ENCODE measurements at regions of chr10 and their contacts with region 1.

Region 1: DNA sequence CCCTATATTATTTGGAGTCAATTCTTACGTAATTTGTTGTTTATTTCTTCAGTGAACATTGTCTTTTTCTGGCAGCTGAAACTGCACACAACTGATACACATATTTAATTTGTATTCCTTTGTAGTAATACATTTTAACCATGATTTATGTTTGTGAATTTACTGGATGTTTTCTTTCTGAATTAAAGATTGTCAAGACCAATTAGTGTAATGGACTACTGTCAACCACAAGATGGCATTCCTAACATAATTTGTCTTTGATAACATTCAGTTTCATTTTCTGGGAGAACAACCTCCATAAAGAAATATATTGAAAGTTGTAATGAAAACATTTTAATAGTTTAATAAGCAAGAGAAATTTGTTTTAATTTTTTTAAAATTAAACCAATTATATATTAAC is 10.1 kb downstream of the THNSL1 start:
- DNase-seq: no peak

Region 2: DNA sequence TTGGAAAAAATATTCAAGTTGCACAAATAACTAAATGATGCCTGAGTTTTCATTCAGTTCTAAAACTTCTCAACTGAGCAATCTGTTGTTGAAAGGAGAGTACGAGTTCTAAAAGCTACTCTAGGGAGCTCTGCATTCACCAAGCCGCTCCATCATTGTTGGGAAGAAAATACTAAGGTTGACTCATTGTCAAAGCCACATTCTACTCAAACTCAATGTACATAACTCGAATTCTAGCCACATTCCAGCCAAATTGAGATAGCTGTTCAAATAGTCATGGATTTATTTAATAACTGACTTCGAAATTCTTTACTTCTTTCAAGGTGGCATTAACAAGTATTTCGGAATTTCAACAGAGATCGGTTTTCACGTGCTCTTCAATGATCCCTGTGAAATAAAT is 754.1 kb before region 1 on chr10:
- intact Hi-C with region 1: no loop called
- DNase-seq: no peak

Region 3: GRCh38 chr10:24661376-24661775 is 365.1 kb before region 1 on chr10:
- intact Hi-C with region 1: no loop called
- DNase-seq: no peak

Region 4: GRCh38 chr10:24800861-24801260 is 225.6 kb before region 1 on chr10:
- intact Hi-C with region 1: no loop called
- DNase-seq: no peak

Region 5: DNA sequence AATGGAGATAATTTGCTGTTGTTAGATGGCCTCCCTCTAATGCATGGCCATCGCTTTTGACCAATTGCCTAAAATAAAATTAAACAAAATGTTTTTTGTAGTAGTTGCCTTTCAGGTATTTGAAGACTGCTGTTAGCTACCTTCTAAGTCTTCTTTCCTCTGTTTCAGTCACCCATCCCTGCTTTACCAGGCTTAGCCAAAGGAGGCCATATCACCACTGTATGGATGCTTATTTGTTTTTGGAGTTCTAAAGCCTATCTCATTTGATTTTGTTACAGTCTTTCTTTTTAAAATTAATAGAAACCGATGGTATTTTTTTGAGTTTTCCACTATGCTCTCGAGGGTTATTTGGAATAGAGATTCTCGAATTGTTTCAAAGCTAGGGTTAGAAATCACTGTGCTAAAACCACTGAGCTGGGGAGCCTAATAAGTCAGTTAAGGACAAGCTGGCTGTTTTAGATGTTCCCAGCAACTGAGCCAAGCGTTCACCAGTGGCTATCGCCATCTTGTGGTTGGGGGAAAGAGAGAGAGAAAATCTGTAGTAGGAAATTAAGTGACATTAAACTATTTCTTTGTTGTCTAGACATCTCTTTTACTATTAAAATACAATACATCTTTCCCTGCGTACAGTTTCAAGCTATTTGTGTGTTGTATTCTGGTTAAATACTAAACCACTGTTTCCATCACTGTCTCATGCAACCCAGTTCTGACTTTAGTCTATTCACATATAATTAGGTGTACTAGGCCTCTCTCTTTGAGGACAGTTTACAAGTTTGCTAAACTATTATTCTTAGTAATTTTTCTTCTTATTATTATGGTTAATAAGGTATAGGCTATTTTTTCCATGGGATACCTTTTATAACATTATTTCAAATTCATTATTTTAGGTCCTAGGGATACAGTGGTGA is 200.6 kb after region 1 on chr10:
- intact Hi-C with region 1: loop called (anchors 5 kb)
- DNase-seq: peak in 7 of 10 donors; percentile 17 to 89 (median 49)

Measured in posterior cingulate gyrus (tissue), 11 donors.